ENCODE measurements at regions of chr11 and their contacts with region 1.

Region 1: DNA sequence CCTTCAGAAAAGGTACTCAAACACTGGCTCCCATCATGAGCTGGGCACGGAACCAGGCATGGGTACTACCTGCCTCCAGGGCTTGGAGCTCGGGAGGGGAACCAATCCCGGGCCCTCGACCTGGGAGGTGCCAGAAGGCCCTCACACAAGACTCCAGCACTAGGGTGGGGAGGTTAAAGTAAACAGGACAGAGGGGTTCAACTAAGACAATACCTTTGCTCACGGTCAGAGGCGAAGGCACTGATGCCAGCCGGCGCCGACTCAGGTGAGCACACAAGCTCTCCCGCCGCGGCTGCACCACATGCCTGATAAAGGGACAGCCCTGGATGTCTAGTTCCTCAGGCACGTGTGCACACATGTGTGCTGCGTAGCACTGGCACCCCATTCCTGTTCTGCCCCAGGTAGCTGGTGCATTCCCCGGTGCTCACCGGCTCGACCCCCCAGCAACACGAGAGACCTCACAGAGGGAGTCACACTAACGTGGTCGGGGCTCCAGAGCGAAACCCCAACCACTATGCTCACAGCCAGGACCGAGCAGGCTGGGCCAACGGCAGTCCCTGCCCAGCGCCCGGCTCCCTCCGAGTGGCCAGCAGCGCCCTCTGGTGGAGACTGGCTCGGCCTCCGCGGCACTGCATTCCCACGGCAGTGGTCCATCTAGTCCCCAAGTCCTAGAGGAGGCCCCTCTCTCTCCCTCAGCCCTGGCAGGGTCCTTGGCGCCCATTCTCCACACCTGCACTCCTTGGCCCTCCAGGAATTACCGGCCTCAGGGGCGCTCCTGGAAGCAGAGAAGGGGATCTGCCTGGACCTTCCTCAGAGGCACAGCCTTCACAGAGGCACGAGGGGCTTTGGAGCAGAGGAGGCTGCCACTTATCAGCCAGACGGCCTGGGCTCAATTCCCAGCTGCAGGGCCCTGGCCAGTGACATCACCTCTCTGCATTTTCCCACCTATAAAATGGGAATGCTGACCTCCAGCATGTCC is 28.8 kb upstream of the MOB2 start:
- DNase-seq: peak; percentile 48 to 64
- ATAC-seq: peak; percentile 85 to 88
- H3K4me3 ChIP-seq: peak overlapping the region in 2 of 4 donors; percentile 20 to 30
- H3K27ac ChIP-seq: peak overlapping the region in 1 of 4 donors; percentile 45
- H3K4me1 ChIP-seq: peaks cover 38 to 50% of the 10 kb centered on the region in 2 donors
- H3K27me3 ChIP-seq: no peaks in the 10 kb centered on the region
- CTCF ChIP-seq: peak; percentile 85 to 97 (median 95)
- POLR2A ChIP-seq: no peak

Region 2: GRCh38 chr11:1113405-1114201 is 401.8 kb before region 1 on chr11:
- in situ Hi-C with region 1: no loop called
- intact Hi-C with region 1: loop called (anchors 10 kb)
- DNase-seq: no peak
- ATAC-seq: no peak
- H3K4me3 ChIP-seq: no peak overlapping the region
- H3K27ac ChIP-seq: no peak overlapping the region
- H3K4me1 ChIP-seq: no peaks in the 10 kb centered on the region
- H3K27me3 ChIP-seq: peaks cover 0 to 9% (median 0%) of the 10 kb centered on the region in 3 donors
- CTCF ChIP-seq: no peak
- POLR2A ChIP-seq: no peak

Region 3: DNA sequence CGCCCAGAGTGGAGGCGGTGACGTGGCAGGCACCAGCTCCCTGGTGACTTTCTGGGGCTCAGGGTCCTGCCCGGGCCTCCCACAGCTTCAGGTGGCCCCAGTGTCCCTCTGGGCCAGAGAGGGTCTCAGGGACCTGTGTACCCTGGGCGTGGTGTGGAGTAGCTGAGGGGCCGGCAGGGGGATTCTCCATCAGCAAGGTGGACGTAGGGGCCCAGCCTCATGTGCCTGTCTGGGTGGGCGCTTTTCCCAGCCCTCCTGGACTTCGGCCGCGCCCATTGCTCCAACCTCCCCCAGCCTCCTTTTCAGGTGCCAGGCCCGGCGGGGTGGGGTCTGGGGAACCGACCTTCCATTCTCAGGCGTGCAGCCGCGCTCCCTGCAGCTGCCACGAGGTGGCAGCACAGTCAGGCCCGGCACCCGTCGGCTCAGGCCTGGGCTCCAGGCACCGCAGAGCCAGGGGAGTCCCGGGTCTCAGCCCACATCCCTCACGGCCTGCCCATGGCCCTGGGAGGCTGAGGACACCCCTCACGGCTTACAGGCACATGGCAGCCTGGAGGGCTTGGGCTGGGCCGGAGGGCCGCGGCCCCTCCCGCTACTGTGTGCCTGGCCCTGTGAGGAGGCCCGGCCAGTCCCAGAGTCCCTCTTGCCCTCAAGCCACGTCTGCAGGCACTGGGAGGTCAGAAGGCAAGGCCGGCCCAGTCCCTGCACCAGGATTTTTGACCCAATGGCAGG is 312.4 kb before region 1 on chr11:
- in situ Hi-C with region 1: loop called in 3 of 4 experiments (anchors 25 kb)
- intact Hi-C with region 1: loop called (anchors 1 kb)
- DNase-seq: peak in 1 of 2 donors; percentile 43
- ATAC-seq: peak; percentile 74 to 81
- H3K4me3 ChIP-seq: no peak overlapping the region
- H3K27ac ChIP-seq: no peak overlapping the region
- H3K4me1 ChIP-seq: no peaks in the 10 kb centered on the region
- H3K27me3 ChIP-seq: peaks cover 22 to 33% (median 23%) of the 10 kb centered on the region in 3 donors
- CTCF ChIP-seq: peak; percentile 67 to 96 (median 92)
- POLR2A ChIP-seq: no peak

Region 4: GRCh38 chr11:1262172-1263006 is 253.0 kb before region 1 on chr11:
- in situ Hi-C with region 1: loop called in 1 of 4 experiments (anchors 25 kb)
- intact Hi-C with region 1: no loop called
- DNase-seq: peak; percentile 86 to 91
- ATAC-seq: peak; percentile 84 to 94
- H3K4me3 ChIP-seq: peak overlapping the region; percentile 58 to 69 (median 64)
- H3K27ac ChIP-seq: peak overlapping the region; percentile 79 to 87 (median 83)
- H3K4me1 ChIP-seq: peaks cover 4 to 18% of the 10 kb centered on the region in 2 donors
- H3K27me3 ChIP-seq: no peaks in the 10 kb centered on the region
- CTCF ChIP-seq: no peak
- POLR2A ChIP-seq: peak; percentile 50 to 52

Region 5: GRCh38 chr11:1458340-1459218 is 56.8 kb before region 1 on chr11:
- in situ Hi-C with region 1: no loop called
- intact Hi-C with region 1: loop called (anchors 1 kb)
- DNase-seq: no peak
- ATAC-seq: peak in 1 of 2 donors; percentile 28
- H3K4me3 ChIP-seq: no peak overlapping the region
- H3K27ac ChIP-seq: no peak overlapping the region
- H3K4me1 ChIP-seq: peaks cover 0 to 2% of the 10 kb centered on the region in 2 donors
- H3K27me3 ChIP-seq: no peaks in the 10 kb centered on the region
- CTCF ChIP-seq: peak in 3 of 5 experiments; percentile 9 to 35 (median 24)
- POLR2A ChIP-seq: no peak

Region 6: DNA sequence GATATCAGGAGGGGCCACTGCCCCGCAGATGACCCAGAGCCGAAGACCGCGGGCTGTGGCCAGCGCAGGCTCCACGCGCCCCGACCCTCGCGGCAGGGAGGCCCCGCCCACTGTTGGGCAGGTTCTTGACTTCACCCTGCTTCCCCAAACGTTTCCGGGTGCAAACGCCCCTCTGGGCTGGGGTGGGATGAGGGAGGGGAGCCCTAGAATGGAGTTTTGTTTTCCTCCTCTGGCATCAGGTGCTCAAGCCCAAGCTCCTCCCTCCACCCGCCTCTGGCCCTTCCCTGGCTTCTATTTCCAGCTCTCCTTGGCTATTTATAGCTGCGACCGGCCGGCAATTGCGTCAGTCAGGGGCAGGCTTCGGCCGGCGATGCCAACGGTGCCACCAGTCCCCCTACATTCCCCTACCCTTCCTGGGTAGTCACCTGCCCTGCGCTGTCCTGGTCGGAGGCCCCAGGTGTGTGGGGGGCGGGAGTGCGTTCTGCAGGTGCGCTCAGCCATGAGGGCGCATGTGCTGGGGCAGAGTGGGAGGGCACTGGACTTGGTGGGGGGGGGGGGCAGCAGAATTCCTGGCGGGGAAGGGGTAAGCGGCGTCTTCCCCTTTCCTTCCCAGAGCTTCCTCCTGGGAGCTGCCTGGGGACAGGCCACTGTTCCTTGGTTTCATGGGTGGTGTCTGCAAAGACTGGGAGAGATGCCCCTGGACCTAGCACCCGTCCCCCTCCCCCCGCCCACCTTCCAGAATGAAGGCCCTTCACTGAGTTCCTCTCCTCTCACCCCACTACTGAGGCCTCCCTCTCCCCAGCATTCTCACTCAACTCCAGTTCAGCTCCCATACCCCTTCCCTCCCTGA is 33.1 kb after region 1 on chr11:
- in situ Hi-C with region 1: no loop called
- intact Hi-C with region 1: no loop called
- DNase-seq: peak; percentile 75 to 92
- ATAC-seq: peak; percentile 84 to 86
- H3K4me3 ChIP-seq: peak overlapping the region; percentile 19 to 47 (median 37)
- H3K27ac ChIP-seq: peak overlapping the region; percentile 82 to 99 (median 90)
- H3K4me1 ChIP-seq: peaks cover 20 to 35% of the 10 kb centered on the region in 2 donors
- H3K27me3 ChIP-seq: no peaks in the 10 kb centered on the region
- CTCF ChIP-seq: no peak
- POLR2A ChIP-seq: peak; percentile 82 to 84

Region 7: DNA sequence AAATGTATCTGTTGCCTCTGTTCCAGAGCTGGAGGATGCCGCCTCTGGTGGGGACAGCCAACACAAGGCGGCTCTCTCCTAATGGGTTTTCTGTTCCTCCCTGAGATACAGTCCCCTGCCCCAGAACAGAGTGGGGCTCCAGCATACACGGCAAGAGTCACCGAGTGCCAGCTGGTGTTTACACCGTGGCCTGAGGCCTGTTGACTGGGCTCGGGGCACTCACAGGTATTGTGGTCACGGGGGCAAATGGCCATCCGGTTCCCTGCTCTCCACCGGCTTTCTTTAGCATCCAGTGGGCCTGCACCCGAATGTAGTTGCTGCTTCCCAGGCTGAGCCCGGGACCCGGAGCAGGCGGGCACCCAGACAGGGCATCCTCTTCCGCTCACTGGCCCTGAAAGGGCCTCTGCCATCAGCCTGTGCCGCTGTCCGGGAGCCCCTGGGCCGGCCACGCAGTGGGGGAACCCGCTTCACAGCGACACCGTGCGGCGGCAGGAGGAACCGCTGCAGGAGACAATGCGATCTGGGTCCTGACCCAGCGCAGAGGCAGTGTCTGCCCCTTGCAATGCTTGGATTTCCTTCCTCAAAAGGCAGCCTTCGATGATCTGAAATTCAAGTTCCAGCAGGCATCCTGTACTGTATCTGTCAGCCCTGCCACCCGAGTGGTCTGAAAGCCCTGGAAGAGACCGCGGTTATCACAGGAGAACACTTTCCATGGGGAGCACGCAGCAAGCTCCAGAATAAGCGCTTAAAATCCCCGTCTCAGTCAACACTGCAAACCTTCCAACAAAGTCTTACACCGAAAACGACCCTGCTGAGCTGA is 113.3 kb after region 1 on chr11:
- in situ Hi-C with region 1: no loop called
- intact Hi-C with region 1: no loop called
- DNase-seq: peak in 1 of 2 donors; percentile 21
- ATAC-seq: peak; percentile 81 to 91
- H3K4me3 ChIP-seq: no peak overlapping the region
- H3K27ac ChIP-seq: no peak overlapping the region
- H3K4me1 ChIP-seq: no peaks in the 10 kb centered on the region
- H3K27me3 ChIP-seq: peaks cover 0 to 11% (median 4%) of the 10 kb centered on the region in 3 donors
- CTCF ChIP-seq: peak; percentile 58 to 92 (median 79)
- POLR2A ChIP-seq: no peak

Region 8: DNA sequence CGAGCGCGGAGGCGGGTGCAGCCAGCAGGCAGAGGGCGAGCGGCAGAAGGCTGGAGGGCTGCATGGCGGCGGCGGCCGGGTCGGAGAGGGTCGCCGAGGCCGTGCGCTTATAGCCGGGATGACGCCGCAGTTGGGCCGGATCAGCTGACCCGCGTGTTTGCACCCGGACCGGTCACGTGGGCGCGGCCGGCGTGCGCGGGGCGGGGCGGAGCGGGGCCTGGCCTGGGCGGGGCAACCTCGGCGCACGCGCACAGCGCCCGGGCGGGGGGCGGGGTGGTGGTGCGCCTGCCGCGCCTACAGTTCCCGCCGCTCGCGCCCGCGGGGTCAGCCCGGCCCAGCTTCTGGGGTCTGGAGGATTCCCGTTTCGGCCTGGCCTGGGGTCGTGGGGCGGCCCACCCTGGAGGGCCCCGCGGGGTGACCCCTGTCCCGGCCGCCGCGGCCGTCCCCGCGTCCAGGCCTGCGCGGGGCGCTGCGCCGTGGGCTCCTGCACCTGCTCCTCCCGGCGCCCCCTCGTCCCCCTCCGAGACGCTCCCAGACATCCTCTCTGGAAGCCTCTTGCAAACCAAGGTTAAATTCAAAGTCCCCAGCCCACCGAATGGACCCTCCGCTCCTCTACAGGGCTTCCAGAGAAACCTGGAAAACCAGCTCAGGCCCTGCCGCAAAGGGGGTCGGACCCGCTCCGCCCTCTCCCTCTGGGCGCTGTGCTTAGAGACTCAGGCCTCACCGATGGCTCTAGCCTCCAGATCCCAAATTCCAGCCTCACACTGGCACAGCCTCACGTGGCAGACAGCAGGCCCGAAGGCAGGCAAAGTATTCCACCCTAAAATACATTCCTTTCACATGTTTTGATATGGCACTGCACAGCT is 248.7 kb after region 1 on chr11 and contains the start of gene CTSD:
- in situ Hi-C with region 1: no loop called
- intact Hi-C with region 1: no loop called
- DNase-seq: peak; percentile 85 to 89
- ATAC-seq: peak; percentile 48 to 51
- H3K4me3 ChIP-seq: peak within 1 kb of the TSS; percentile 79 to 99 (median 94)
- H3K27ac ChIP-seq: peak within 1 kb of the TSS; percentile 98 to 100 (median 100)
- H3K4me1 ChIP-seq: peaks cover 32 to 38% of the 10 kb centered on the region in 2 donors
- H3K27me3 ChIP-seq: no peaks in the 10 kb centered on the region
- CTCF ChIP-seq: peak in 2 of 5 experiments; percentile 10 to 24
- POLR2A ChIP-seq: peak; percentile 95 to 97
- total RNA-seq, gene CTSD: 490 to 981 (median 845) TPM

Region 9: GRCh38 chr11:2092956-2093412 is 577.6 kb after region 1 on chr11:
- in situ Hi-C with region 1: no loop called
- intact Hi-C with region 1: no loop called
- DNase-seq: peak; percentile 93 to 98
- ATAC-seq: peak; percentile 74 to 76
- H3K4me3 ChIP-seq: no peak overlapping the region
- H3K27ac ChIP-seq: peak overlapping the region; percentile 60 to 90 (median 74)
- H3K4me1 ChIP-seq: peaks cover 20 to 27% of the 10 kb centered on the region in 2 donors
- H3K27me3 ChIP-seq: no peaks in the 10 kb centered on the region
- CTCF ChIP-seq: no peak
- POLR2A ChIP-seq: no peak